AG04449 (cell line): ENCODE measurements at regions of chr9 and their contacts with region 1.

Region 1: DNA sequence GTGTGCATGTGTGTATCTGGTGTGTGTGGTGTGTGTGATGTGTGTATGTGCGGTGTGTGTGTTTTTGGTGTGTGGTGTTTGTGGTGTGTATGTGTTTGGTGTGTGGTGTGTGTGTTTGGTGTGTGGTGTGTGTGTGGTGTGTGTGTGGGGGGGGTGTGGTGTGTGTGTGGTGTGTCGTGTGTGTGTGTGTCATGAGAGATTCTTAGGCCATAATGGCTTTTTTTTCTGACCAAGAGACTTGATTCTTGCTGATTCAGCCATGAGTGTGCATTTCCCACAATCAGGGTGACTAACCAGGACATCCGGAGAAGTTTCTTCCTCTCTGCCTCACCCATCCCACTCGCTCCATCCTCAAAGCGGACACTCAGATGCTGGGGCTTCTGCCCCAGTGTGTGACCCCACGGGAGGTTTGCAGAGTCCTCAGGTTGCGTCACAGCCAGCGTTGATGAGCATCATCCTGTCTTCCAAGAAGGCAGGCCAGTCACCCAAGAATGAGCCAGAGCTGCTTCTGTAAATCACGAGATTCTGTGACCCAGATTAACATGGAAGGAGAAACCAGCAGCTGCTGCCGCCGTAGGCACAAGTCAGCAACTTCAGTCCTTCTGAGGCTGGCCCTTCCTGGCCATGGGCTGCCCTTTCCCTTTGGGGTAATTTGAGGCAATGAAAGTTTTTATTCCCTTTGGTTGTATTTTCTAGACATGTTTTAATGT is 12.5 kb upstream of the CTSL start:
- DNase-seq: peak; percentile 96
- H3K4me3 ChIP-seq: peak overlapping the region; percentile 45
- CTCF ChIP-seq: peak; percentile 13

Region 2: DNA sequence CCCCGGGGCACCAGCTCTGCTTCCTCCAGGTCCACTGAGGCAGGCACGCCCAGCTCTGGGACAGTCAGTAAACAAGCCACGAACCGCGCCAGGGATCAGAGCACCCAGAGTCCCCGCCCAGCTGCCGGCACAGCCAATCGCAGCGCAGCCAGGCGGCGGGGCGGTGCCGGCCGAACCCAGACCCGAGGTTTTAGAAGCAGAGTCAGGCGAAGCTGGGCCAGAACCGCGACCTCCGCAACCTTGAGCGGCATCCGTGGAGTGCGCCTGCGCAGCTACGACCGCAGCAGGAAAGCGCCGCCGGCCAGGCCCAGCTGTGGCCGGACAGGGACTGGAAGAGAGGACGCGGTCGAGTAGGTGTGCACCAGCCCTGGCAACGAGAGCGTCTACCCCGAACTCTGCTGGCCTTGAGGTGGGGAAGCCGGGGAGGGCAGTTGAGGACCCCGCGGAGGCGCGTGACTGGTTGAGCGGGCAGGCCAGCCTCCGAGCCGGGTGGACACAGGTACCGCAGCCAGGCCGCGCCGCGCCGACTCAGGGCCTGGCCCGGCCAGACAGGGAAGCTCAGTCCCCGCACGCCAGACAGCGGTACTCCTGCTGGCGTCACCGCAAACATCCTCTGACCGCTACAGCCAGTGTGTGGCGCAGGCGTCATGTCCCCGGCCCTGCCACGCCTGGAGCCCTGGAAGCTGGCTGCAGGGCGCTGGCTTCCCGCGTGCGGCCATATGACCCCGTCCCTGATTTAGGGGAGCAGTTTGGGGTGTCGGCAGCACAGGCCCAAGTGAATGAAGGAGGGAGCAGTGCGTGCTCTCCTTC is 12.7 kb after region 1 on chr9 and contains the start of gene CTSL:
- CTCF ChIA-PET with region 1: interaction called, 15 read pairs
- POLR2A ChIA-PET with region 1: interaction called, 23 read pairs
- DNase-seq: no peak
- H3K4me3 ChIP-seq: peak within 1 kb of the TSS; percentile 85
- CTCF ChIP-seq: peak; percentile 41